A549 (cell line): ENCODE measurements at regions of chr2 and their contacts with region 1.

Region 1: GRCh38 chr2:98269274-98269673 is 77.0 kb upstream of the CNGA3 start:
- DNase-seq: peak; percentile 44 to 51
- ATAC-seq: peak; percentile 74 to 80; a peak in 5 of 6 replicates
- H3K4me3 ChIP-seq: no peak overlapping the region
- H3K27ac ChIP-seq: no peak overlapping the region; a peak in 1 of 6 replicates
- H3K4me1 ChIP-seq: no peaks in the 10 kb centered on the region
- CTCF ChIP-seq: peak; percentile 53
- EP300 ChIP-seq: no peak
- POLR2A ChIP-seq: no peak
- RAD21 ChIP-seq: peak; percentile 55 to 69; a peak in 4 of 5 replicates

Region 2: GRCh38 chr2:98253461-98254070 is 15.7 kb before region 1 on chr2:
- CTCF ChIA-PET with region 1: interaction called, 15 read pairs
- POLR2A ChIA-PET with region 1: no interaction called
- DNase-seq: no peak
- ATAC-seq: no peak
- H3K4me3 ChIP-seq: no peak overlapping the region
- H3K27ac ChIP-seq: no peak overlapping the region
- H3K4me1 ChIP-seq: no peaks in the 10 kb centered on the region
- CTCF ChIP-seq: no peak
- EP300 ChIP-seq: no peak
- POLR2A ChIP-seq: no peak
- RAD21 ChIP-seq: no peak